PC-9 (cell line): ENCODE measurements at regions of chr17 and their contacts with region 1.

Region 1: DNA sequence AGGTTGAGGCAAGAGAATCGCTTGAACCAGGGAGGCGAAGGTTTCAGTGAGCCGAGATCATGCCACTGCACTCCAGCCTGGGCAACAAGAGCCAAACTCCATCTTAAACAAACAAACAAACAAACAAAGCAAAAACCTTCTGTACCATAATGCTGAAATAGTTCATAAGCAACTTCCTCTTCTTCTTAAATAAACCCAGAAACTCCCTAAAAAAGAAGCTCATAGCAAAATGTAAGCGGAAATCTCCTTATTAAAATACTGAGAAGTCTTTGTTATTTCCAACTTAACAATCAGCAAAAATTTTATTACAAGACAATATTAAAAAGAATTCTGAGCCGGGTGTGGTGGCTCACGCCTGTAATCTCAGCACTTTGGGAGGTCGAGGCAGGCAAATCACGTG is 82.8 kb downstream of the FBXL20 start:
- DNase-seq: no peak
- H3K4me3 ChIP-seq: no peak overlapping the region
- H3K27ac ChIP-seq: no peak overlapping the region
- H3K4me1 ChIP-seq: no peaks in the 10 kb centered on the region
- H3K27me3 ChIP-seq: no peaks in the 10 kb centered on the region
- CTCF ChIP-seq: no peak

Region 2: DNA sequence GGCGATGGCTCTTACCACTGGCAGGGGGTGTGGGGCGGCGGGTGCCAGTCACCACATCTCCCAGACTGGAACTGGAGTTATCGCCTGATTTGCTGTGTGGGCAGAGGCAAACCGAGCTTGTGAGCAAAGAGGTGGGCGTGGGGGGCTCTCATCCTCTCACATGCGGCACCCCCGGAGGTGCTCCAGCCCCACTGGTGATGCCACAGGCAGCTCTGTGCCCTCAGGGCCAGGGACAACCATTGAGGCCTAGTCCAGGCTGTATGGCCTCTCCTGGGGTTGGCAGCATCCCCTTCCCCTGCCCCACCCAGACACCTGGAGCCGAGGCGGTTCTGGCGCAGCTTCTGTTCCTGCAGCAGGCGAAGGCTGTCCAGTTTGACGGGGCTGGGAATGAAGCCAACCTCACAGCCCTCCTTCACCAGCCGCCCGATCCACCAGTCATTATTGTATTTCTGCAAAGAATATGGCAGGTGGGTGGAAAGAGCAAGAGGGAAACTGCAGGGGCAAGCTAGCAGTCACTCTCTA is 132.1 kb before region 1 on chr17:
- CTCF ChIA-PET with region 1: no interaction called
- POLR2A ChIA-PET with region 1: no interaction called
- intact Hi-C with region 1: no loop called
- DNase-seq: no peak
- H3K4me3 ChIP-seq: no peak overlapping the region
- H3K27ac ChIP-seq: no peak overlapping the region
- H3K4me1 ChIP-seq: no peaks in the 10 kb centered on the region
- H3K27me3 ChIP-seq: no peaks in the 10 kb centered on the region
- CTCF ChIP-seq: no peak

Region 3: DNA sequence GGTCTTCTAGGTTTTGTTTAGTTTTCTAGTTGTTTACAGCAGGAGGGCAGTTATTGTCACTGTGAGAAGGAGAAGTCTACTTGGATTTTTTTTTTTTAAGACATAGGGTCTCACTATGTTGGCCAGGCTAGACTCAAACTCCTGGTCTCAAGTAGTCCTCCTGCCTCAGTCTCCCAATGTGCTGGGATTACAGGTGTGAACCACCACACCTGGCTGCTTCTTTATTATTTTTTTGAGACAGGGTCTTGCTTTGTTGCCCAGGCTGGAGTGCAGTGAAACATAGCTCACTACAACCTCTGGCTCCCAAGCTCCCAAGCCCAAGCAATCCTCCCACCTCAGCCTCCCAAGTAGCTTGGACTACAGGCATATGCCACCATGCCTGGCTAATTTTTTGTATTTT is 24.6 kb before region 1 on chr17:
- CTCF ChIA-PET with region 1: no interaction called
- POLR2A ChIA-PET with region 1: interaction called, 12 read pairs
- intact Hi-C with region 1: no loop called
- DNase-seq: no peak
- H3K4me3 ChIP-seq: no peak overlapping the region
- H3K27ac ChIP-seq: no peak overlapping the region
- H3K4me1 ChIP-seq: no peaks in the 10 kb centered on the region
- H3K27me3 ChIP-seq: no peaks in the 10 kb centered on the region
- CTCF ChIP-seq: no peak